Endothelial cell of umbilical vein (primary cell): ENCODE measurements at regions of chr20 and their contacts with region 1.

Region 1: GRCh38 chr20:1392823-1393506 is at the start of gene FKBP1A:
- DNase-seq: peak; percentile 90
- H3K4me3 ChIP-seq: peak within 1 kb of the TSS; percentile 82 to 86 (median 83)
- H3K27ac ChIP-seq: peak within 1 kb of the TSS; percentile 90
- H3K4me1 ChIP-seq: peaks cover 70% of the 10 kb centered on the region
- H3K27me3 ChIP-seq: no peaks in the 10 kb centered on the region
- CTCF ChIP-seq: peak in 1 of 2 donors; percentile 8
- POLR2A ChIP-seq: peak; percentile 92
- total RNA-seq, gene FKBP1A: 968 and 982 TPM in 2 replicates

Region 2: GRCh38 chr20:1225783-1226654 is 166.9 kb before region 1 on chr20 and contains the start of gene RAD21L1:
- CTCF ChIA-PET with region 1: no interaction called
- POLR2A ChIA-PET with region 1: no interaction called
- dilution Hi-C with region 1: no loop called
- intact Hi-C with region 1: loop called (anchors 5 kb)
- DNase-seq: peak; percentile 50
- H3K4me3 ChIP-seq: peak within 1 kb of the TSS; percentile 70 to 90 (median 71)
- H3K27ac ChIP-seq: peak within 1 kb of the TSS; percentile 70
- H3K4me1 ChIP-seq: peaks cover 6% of the 10 kb centered on the region
- H3K27me3 ChIP-seq: peaks cover 0 to 23% of the 10 kb centered on the region in 2 experiments
- CTCF ChIP-seq: no peak
- POLR2A ChIP-seq: no peak
- total RNA-seq, gene RAD21L1: not detected in 2 replicates

Region 3: DNA sequence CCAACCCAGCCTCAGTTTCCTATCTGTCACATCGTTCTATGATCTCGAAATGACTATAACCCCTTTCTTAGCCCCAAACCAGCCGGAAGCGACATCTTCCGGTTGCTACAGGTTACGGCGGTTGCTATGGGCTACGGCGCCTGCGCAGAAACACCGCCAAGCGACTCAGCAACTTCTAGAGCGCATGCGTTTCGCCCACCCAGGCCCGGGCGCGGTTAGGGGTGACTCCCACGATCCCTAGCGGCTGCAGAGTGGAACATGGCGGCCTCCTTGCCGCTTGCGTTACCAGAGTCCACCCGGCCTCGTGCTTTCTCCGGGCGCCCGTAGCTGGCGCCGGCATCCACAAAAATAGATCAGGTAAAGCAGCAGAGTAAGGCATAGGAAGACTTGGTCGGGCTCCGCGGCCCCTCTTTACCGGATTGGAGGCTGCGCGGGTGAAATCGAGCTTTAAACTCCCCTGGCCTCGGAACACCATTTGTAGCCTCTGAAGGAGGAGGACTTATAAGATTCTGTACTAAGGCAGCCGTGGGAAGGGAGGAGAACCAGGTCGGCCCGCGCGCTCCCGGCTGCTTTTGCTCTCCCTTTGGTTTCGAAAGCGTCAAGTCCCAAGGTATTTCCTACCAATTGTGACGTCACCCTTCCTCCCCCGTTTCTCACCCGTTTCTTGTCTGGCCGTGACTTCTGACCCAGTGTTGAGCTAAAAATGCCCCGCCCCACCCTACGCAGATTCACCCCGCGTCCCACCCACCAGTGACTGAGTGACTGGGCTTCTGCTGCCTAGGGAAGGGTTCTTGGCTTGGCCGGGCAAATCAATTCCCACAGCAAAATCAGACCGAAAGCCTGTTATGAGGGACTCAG is 67.6 kb before region 1 on chr20:
- CTCF ChIA-PET with region 1: interaction called, 7 read pairs
- POLR2A ChIA-PET with region 1: interaction called, 7 read pairs
- dilution Hi-C with region 1: no loop called
- intact Hi-C with region 1: loop called (anchors 1 kb)
- DNase-seq: peak; percentile 97
- H3K4me3 ChIP-seq: peak overlapping the region; percentile 34 to 68 (median 67)
- H3K27ac ChIP-seq: peak overlapping the region; percentile 99
- H3K4me1 ChIP-seq: peaks cover 76% of the 10 kb centered on the region
- H3K27me3 ChIP-seq: no peaks in the 10 kb centered on the region
- CTCF ChIP-seq: peak in 1 of 2 donors; percentile 29
- POLR2A ChIP-seq: peak; percentile 86

Region 4: DNA sequence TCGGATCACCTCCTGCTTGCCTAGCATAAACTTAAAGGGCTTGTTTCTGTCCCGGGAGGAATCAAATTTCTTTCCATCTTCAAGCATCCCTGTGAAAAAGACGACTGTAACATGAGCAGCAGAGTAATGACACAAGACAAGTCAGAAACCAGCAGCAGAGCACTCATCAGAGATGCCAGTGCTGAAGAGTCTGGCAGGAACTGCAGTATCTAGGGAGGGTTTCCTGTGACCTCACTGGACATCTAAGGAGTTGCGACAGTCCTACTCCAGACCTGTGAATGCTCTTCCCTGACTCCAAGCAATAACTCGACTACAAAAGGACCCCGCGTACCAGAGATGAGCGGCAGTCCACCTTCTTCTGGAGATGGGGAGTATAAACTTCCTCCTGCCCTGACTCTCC is 17.4 kb before region 1 on chr20:
- CTCF ChIA-PET with region 1: interaction called, 9 read pairs
- POLR2A ChIA-PET with region 1: interaction called, 9 read pairs
- dilution Hi-C with region 1: no loop called
- intact Hi-C with region 1: loop called (anchors 1 kb)
- DNase-seq: peak; percentile 47
- H3K4me3 ChIP-seq: no peak overlapping the region
- H3K27ac ChIP-seq: peak overlapping the region; percentile 83
- H3K4me1 ChIP-seq: peaks cover 99% of the 10 kb centered on the region
- H3K27me3 ChIP-seq: no peaks in the 10 kb centered on the region
- CTCF ChIP-seq: no peak
- POLR2A ChIP-seq: peak; percentile 45

Region 5: DNA sequence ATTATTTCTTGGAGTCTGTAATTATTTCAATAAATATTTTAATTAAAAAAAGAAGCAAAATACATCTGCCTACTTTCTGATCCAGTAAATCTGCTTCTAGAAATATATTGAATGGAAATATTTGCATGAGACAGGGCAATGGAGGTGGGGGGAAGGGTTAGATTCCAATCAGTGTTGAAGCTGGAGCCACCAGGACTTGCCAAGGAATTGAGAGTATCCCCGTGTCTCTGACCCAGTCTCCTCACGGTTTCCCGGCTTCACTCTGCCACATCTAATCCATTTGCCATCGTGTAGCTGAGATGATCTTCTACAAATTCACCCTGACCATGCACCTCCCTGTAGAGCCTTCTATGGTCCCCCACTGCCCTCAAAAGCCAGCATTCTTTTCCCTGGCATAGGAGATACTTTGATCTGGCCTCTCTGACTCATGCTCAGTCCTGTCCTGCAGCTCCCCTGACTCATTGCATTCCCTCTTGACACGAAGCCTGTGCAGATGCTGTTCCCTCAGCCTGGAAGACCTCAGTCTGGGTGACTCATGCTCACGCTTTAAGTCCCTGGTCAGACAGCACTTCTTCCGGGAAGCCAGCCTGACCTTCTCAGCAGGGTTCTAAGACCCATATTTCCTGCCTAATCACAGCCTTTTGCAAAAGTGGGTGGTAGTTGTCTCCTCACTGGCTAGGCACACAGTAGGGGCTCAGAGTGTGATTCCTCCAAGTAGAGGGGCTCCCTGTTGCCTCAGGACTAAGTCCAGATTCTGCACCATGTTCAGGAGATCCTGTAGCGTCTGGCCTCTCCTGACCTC is 22.9 kb after region 1 on chr20:
- CTCF ChIA-PET with region 1: interaction called, 3 read pairs
- POLR2A ChIA-PET with region 1: interaction called, 3 read pairs
- dilution Hi-C with region 1: no loop called
- intact Hi-C with region 1: loop called (anchors 1 kb)
- DNase-seq: peak; percentile 80
- H3K4me3 ChIP-seq: no peak overlapping the region
- H3K27ac ChIP-seq: peak overlapping the region; percentile 63
- H3K4me1 ChIP-seq: peaks cover 31% of the 10 kb centered on the region
- H3K27me3 ChIP-seq: no peaks in the 10 kb centered on the region
- CTCF ChIP-seq: no peak
- POLR2A ChIP-seq: no peak

Region 6: DNA sequence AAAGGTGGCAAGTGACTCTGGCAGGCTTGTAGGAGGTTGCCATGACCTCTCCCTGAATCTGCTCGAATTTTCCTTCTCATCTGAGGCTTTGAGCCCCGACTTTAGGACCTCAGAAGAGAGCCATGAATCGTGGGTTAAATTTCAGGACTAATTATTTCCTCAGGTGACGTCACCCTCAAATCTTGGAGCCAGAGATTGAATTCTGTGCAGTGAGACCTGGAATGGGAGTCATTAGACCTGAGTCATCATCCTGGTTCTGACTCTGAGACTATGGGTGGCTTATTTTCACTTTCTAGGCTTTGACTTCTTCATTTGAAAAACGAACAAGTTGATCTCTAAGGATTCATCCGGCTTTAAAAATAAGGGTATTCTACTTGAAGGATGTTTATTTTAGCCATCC is 649.4 kb after region 1 on chr20:
- CTCF ChIA-PET with region 1: no interaction called
- POLR2A ChIA-PET with region 1: no interaction called
- dilution Hi-C with region 1: no loop called
- intact Hi-C with region 1: no loop called
- DNase-seq: no peak
- H3K4me3 ChIP-seq: no peak overlapping the region
- H3K27ac ChIP-seq: no peak overlapping the region
- H3K4me1 ChIP-seq: no peaks in the 10 kb centered on the region
- H3K27me3 ChIP-seq: peaks cover 4 to 7% of the 10 kb centered on the region in 2 experiments
- CTCF ChIP-seq: no peak
- POLR2A ChIP-seq: no peak